Activated CD8-positive, alpha-beta T cell treated with anti-CD3 and anti-CD28 coated beads for 36 hours (primary cell): ENCODE measurements at regions of chr12 and their contacts with region 1.

Region 1: GRCh38 chr12:50119387-50119786 is 7.4 kb downstream of the COX14 start:
- DNase-seq: no peak
- ATAC-seq: no peak
- H3K4me3 Mint-ChIP-seq: no peak overlapping the region
- H3K27ac Mint-ChIP-seq: no peak overlapping the region
- H3K4me1 Mint-ChIP-seq: peaks cover 21% of the 10 kb centered on the region
- H3K27me3 Mint-ChIP-seq: no peaks in the 10 kb centered on the region
- CTCF ChIP-seq: no peak

Region 2: GRCh38 chr12:50006789-50007436 is 112.5 kb before region 1 on chr12:
- CTCF ChIA-PET with region 1: no interaction called
- POLR2A ChIA-PET with region 1: no interaction called
- intact Hi-C with region 1: no loop called
- DNase-seq: no peak
- ATAC-seq: no peak
- H3K4me3 Mint-ChIP-seq: no peak overlapping the region
- H3K27ac Mint-ChIP-seq: no peak overlapping the region
- H3K4me1 Mint-ChIP-seq: peaks cover 4% of the 10 kb centered on the region
- H3K27me3 Mint-ChIP-seq: no peaks in the 10 kb centered on the region
- CTCF ChIP-seq: no peak

Region 3: GRCh38 chr12:50132505-50133135 is 13.2 kb after region 1 on chr12:
- CTCF ChIA-PET with region 1: interaction called, 57 read pairs
- POLR2A ChIA-PET with region 1: interaction called, 4 read pairs
- intact Hi-C with region 1: loop called (anchors 1 kb)
- DNase-seq: no peak
- ATAC-seq: peak; percentile 45
- H3K4me3 Mint-ChIP-seq: no peak overlapping the region
- H3K27ac Mint-ChIP-seq: peak overlapping the region; percentile 68
- H3K4me1 Mint-ChIP-seq: peaks cover 4% of the 10 kb centered on the region
- H3K27me3 Mint-ChIP-seq: no peaks in the 10 kb centered on the region
- CTCF ChIP-seq: peak; percentile 39